Sigmoid colon (tissue), 7 donors: ENCODE measurements at regions of chr2 and their contacts with region 1.

Region 1: GRCh38 chr2:46876741-46877384 is 38.7 kb downstream of the MCFD2 start:
- DNase-seq: no peak
- H3K4me3 ChIP-seq: no peak overlapping the region
- H3K27ac ChIP-seq: peak overlapping the region; percentile 55 to 85 (median 72)
- H3K4me1 ChIP-seq: peaks cover 0 to 66% (median 52%) of the 10 kb centered on the region in 4 donors
- H3K27me3 ChIP-seq: no peaks in the 10 kb centered on the region
- CTCF ChIP-seq: peak; percentile 45 to 59 (median 46)
- EP300 ChIP-seq: no peak
- POLR2A ChIP-seq: no peak

Region 2: DNA sequence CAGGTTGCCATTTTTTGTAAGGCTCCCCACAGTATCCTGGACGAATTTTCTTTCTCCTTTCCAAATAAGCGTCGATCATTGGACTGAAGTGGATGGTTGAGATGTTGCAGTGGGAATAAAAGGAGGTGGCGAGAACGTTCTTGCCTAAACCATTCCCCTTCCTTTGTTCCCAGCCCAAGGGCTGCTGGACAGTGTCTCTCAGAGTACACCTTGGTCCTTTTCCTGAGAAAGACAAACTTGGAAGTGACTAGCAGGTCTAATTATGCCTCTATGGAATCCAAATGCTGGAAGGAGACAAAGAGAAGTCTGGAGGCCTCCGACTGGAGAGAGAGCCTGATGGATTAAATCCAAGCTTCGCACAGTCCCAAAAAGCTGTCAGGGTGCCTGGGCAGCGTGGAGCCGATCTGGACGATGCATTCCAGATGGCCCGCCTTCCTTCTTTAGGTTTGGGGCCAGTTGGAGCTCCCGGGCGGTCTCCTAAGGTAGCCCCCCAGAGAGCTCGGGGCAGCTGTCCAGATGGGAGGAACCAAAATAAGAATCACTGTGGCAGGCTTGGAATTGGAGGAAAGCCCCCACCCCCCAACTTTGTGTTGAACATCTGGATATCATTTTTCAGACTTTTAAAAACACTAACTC is 210.7 kb before region 1 on chr2:
- intact Hi-C with region 1: loop called (anchors 2 kb)
- DNase-seq: peak; percentile 95
- H3K4me3 ChIP-seq: no peak overlapping the region
- H3K27ac ChIP-seq: peak overlapping the region; percentile 58 to 80 (median 78)
- H3K4me1 ChIP-seq: peaks cover 0 to 88% (median 78%) of the 10 kb centered on the region in 4 donors
- H3K27me3 ChIP-seq: no peaks in the 10 kb centered on the region
- CTCF ChIP-seq: no peak
- EP300 ChIP-seq: peak; percentile 60 to 90 (median 80)
- POLR2A ChIP-seq: no peak

Region 3: GRCh38 chr2:46815121-46815785 is 61.6 kb before region 1 on chr2:
- intact Hi-C with region 1: loop called (anchors 5 kb)
- DNase-seq: no peak
- H3K4me3 ChIP-seq: no peak overlapping the region
- H3K27ac ChIP-seq: peak overlapping the region; percentile 72 to 83 (median 78)
- H3K4me1 ChIP-seq: peaks cover 0 to 74% (median 68%) of the 10 kb centered on the region in 4 donors
- H3K27me3 ChIP-seq: no peaks in the 10 kb centered on the region
- CTCF ChIP-seq: no peak
- EP300 ChIP-seq: no peak
- POLR2A ChIP-seq: no peak

Region 4: DNA sequence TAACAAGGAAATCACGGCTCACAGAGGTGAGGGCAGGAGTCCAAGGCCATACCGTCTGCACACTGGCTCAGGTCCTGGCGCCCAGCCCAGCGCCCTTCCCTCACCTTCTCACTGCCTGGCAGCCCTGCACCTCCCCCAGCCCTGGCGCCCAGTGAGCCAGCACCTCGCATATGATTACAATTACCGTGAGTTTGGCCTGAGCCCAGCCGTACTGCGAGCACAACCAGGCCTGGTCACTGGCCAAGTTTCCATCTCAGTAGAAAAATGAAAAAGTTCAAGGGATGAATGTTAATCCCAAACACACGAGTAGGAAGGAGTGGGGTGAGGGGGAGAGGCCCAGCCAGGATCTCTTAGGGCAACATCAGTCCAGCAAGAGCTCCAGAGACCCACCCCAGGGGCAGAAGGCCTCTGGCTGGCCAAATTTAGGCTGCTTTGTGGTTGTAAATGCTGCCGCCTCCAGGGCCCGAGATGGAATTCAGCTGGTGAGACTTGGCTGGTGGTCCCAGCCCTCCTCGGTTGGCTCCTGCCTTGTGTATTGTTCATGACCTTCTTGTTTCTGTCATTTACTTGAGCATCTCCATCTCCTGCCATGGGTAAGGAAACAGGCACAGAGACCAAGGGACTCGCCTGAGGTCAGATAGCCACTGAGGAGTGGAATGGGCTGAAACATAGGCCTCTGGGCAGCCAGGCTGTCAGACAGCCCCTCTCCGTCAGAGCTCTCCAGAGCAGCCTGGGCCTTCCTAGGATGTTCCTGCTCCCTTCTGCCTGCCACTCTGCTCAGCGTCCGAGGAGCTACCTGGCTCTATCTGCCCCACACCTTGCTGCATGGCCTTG is 29.4 kb before region 1 on chr2:
- intact Hi-C with region 1: loop called (anchors 2 kb)
- DNase-seq: peak; percentile 99
- H3K4me3 ChIP-seq: no peak overlapping the region
- H3K27ac ChIP-seq: peak overlapping the region; percentile 90 to 95 (median 94)
- H3K4me1 ChIP-seq: peaks cover 0 to 98% (median 80%) of the 10 kb centered on the region in 4 donors
- H3K27me3 ChIP-seq: no peaks in the 10 kb centered on the region
- CTCF ChIP-seq: no peak
- EP300 ChIP-seq: peak; percentile 71 to 96 (median 84)
- POLR2A ChIP-seq: no peak